ENCODE measurements at regions of chr11 and their contacts with region 1.

Region 1: DNA sequence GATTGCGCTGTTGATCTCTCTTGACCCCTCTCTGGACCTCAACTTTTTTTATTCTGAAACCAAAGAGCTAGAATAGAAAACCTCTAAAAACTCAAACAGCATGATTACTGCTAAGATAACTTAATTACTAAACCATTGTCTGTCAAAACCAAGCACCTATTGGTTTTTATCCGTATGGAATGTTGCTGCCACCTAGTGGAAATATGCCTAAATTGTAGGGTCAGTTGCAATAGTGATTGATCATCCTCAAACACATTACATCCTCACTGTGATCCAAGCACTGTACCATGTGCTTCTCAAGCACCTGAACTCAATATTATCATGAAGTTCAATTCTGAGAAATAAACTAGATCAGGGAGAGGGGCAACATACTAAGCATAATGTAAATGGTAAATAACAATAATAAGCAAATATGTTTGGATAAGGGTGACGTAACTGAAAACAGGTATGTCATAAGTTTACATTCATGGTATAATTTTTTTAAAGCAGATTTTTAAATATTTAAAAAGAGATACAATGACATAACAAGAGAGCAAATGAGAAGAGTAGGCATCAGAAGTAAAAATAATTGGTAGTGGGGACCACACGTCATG is 3.8 kb upstream of the OR5A2 start:
- DNase-seq: peak; percentile 24
- H3K4me3 Mint-ChIP-seq: no peak overlapping the region
- H3K27ac Mint-ChIP-seq: no peak overlapping the region
- H3K4me1 Mint-ChIP-seq: no peaks in the 10 kb centered on the region
- H3K27me3 Mint-ChIP-seq: peaks cover 6% of the 10 kb centered on the region

Region 2: GRCh38 chr11:59335001-59335400 is 95.0 kb before region 1 on chr11:
- intact Hi-C with region 1: no loop called
- DNase-seq: no peak
- H3K4me3 Mint-ChIP-seq: no peak overlapping the region
- H3K27ac Mint-ChIP-seq: no peak overlapping the region
- H3K4me1 Mint-ChIP-seq: no peaks in the 10 kb centered on the region
- H3K27me3 Mint-ChIP-seq: peaks cover 2% of the 10 kb centered on the region

Region 3: GRCh38 chr11:59355226-59355625 is 74.8 kb before region 1 on chr11:
- intact Hi-C with region 1: no loop called
- DNase-seq: no peak
- H3K4me3 Mint-ChIP-seq: no peak overlapping the region
- H3K27ac Mint-ChIP-seq: no peak overlapping the region
- H3K4me1 Mint-ChIP-seq: no peaks in the 10 kb centered on the region
- H3K27me3 Mint-ChIP-seq: no peaks in the 10 kb centered on the region

Region 4: DNA sequence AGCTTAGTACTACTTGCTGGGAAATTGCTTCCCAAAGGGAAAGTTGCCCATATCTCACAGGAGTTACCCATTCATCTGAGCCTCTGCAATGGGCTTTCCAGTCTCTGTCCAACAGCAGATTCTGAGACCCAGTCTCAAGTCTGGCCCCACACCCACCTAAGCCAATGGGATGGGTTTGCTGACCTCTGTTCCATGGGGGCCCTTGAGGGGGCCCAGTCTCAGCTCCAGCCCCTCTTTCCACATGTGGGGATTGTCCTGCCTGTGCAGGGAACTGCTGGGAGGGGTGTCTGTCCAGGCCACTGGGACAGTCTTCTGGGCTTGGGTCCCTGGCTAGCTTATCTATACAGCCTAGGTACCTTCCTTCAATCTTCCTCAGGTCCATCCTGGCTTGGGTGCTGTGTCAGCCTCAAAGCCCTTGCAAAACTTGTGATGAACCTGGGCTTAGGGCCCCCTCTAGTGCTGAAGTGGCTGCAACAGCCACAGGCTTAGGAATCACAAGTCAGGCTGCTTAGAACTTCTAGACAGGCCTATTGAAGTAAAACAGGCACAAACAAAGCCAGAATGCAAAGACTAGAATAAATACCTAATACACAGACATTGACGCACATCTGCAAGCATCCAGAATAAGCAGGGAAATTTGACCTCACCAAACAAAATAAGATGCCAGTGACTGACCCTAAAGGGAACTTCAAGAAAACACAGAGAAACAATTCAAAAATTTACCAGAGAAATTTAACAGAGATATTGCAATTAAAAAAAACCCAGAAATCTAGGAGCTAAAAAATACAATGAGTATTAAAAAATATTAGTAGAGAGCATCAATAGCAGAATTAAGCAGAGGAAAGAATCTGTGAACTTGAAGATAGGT is 250.5 kb after region 1 on chr11:
- intact Hi-C with region 1: loop called (anchors 2 kb)
- DNase-seq: peak; percentile 42
- H3K4me3 Mint-ChIP-seq: no peak overlapping the region
- H3K27ac Mint-ChIP-seq: no peak overlapping the region
- H3K4me1 Mint-ChIP-seq: no peaks in the 10 kb centered on the region
- H3K27me3 Mint-ChIP-seq: peaks cover 8% of the 10 kb centered on the region